ENCODE measurements at regions of chr9 and their contacts with region 1.

Region 1: GRCh38 chr9:127916665-127917613 is at the start of gene ST6GALNAC4:
- DNase-seq: peak; percentile 88 to 96 (median 93)
- H3K4me3 ChIP-seq: peak within 1 kb of the TSS; percentile 54 to 92 (median 80)
- H3K27ac ChIP-seq: peak within 1 kb of the TSS in 55 of 59 donors; percentile 6 to 88 (median 77)
- H3K27me3 ChIP-seq: no peaks in the 10 kb centered on the region
- CTCF ChIP-seq: peak in 9 of 56 donors; percentile 10 to 43 (median 23)
- total RNA-seq, gene ST6GALNAC4: 13.2 to 58.0 (median 23.6) TPM

Region 2: DNA sequence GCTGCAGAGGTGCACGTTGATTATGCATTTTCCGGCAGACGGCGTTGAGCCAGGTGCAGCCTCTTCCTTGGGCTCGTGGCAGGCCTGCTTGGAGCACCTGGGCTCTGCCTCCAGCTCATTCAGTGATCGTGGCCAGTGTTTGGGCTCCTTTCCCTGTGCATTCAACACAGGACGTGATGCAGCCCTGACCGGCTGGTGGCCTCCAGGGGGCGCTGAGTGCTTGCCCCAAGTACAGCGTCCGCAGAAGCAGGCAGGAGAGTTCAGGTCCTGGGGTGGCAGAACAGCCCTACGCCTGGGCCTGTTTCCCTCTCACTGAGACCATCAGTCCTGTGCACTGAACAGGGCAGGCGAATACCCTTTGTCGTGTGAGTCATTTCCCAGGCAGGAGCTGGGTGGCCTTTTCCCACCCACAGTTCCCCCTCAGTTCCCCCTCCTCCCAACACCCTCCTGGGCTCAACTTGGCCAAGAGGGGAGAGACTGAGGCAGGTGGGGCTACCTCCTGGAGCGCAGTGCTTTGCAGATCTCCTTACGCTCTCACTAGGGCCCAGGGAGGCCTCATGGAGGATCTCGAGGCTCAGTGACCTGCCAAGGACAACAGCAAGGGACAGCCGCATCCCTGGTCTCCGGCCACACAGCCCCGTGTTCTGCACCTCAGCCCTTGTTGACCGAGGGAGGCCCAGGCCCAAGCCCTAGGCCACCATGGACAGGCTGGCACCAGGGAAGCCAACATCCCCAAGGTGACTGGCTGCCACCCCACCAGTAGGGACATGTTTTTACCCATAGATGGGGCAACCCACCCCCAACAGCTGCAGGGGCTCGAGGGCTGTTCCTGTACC is 412.8 kb before region 1 on chr9:
- intact Hi-C with region 1: loop called in 1 of 2 experiments (anchors 5 kb)
- DNase-seq: peak; percentile 66 to 86 (median 83)
- H3K4me3 ChIP-seq: no peak overlapping the region
- H3K27ac ChIP-seq: peak overlapping the region in 8 of 59 donors; percentile 3 to 53 (median 31)
- H3K27me3 ChIP-seq: no peaks in the 10 kb centered on the region
- CTCF ChIP-seq: peak; percentile 61 to 95 (median 87)

Region 3: DNA sequence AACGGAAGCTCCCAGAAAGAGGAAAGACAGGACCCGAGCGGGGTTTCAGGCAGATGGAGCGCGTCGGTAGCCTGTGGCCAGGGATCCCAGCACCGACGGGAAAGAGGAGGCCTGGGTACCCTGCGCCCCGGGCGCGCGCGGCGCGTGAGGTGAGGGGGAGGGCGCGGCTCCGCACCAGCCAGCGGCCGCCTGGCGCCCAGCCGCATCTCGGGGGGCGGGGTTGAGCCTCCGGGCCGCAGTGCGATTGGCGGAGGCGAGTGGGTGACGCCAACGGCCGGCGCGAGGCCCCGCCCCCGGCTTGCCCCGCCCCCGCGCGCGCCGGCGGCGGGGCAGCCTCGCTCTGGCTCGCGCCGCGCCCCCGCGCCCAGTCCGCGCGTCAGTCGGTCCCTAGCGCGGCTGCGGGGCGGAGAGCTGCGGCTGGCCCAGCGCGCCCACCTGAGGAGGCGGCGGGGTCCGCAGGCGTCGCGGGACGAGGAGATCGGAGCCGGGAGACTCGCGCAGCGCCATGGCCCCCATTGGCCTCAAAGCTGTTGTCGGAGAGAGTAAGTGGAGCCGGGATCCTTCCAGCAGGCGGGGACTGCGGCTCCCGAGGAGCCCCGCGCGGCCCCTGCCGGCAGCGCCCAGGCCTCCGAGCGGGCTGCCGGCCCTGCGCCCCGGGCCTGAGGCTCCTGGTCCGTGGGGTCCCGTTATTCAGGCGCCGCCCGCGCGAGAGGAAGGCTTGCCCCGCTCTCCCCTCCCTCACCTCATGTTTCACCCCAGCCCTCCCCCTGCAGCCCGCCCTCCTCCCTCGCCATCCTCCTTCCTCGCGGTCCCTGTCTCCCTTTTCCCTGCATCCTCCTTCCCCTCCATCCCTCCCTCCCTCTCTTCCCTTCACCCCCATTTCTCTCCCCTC is 304.8 kb before region 1 on chr9 and contains the start of gene STXBP1:
- intact Hi-C with region 1: loop called in 1 of 2 experiments (anchors 10 kb)
- DNase-seq: peak; percentile 79 to 97 (median 90)
- H3K4me3 ChIP-seq: peak within 1 kb of the TSS; percentile 75 to 98 (median 93)
- H3K27ac ChIP-seq: peak within 1 kb of the TSS; percentile 68 to 98 (median 92)
- H3K27me3 ChIP-seq: no peaks in the 10 kb centered on the region
- CTCF ChIP-seq: peak in 13 of 56 donors; percentile 6 to 30 (median 17)
- total RNA-seq, gene STXBP1: 334 to 1,348 (median 969) TPM

Region 4: GRCh38 chr9:127785023-127785932 is 131.7 kb before region 1 on chr9:
- intact Hi-C with region 1: loop called (anchors 5 kb)
- DNase-seq: peak; percentile 76 to 90 (median 80)
- H3K4me3 ChIP-seq: peak overlapping the region; percentile 37 to 100 (median 96)
- H3K27ac ChIP-seq: peak overlapping the region; percentile 52 to 98 (median 93)
- H3K27me3 ChIP-seq: no peaks in the 10 kb centered on the region
- CTCF ChIP-seq: peak; percentile 50 to 97 (median 88)

Region 5: GRCh38 chr9:127802576-127803443 is 114.1 kb before region 1 on chr9 and contains the start of gene FPGS:
- intact Hi-C with region 1: loop called in 1 of 2 experiments (anchors 5 kb)
- DNase-seq: peak; percentile 62 to 90 (median 80)
- H3K4me3 ChIP-seq: peak within 1 kb of the TSS; percentile 53 to 93 (median 83)
- H3K27ac ChIP-seq: peak within 1 kb of the TSS; percentile 32 to 94 (median 88)
- H3K27me3 ChIP-seq: no peaks in the 10 kb centered on the region
- CTCF ChIP-seq: peak in 19 of 56 donors; percentile 3 to 39 (median 16)
- total RNA-seq, gene FPGS: 19.5 to 55.8 (median 36.6) TPM

Region 6: GRCh38 chr9:127817881-127818434 is 99.0 kb before region 1 on chr9:
- intact Hi-C with region 1: no loop called
- DNase-seq: peak in 1 of 10 donors; percentile 54
- H3K4me3 ChIP-seq: no peak overlapping the region
- H3K27ac ChIP-seq: peak overlapping the region in 3 of 59 donors; percentile 1 to 57 (median 4)
- H3K27me3 ChIP-seq: no peaks in the 10 kb centered on the region
- CTCF ChIP-seq: no peak

Region 7: GRCh38 chr9:127877566-127877998 is 39.4 kb before region 1 on chr9 and contains the start of gene AK1:
- intact Hi-C with region 1: loop called in 1 of 2 experiments (anchors 5 kb)
- DNase-seq: peak; percentile 85 to 94 (median 90)
- H3K4me3 ChIP-seq: peak within 1 kb of the TSS; percentile 57 to 85 (median 73)
- H3K27ac ChIP-seq: peak within 1 kb of the TSS; percentile 49 to 93 (median 88)
- H3K27me3 ChIP-seq: no peaks in the 10 kb centered on the region
- CTCF ChIP-seq: peak in 15 of 56 donors; percentile 13 to 51 (median 22)
- total RNA-seq, gene AK1: 58.9 to 165 (median 129) TPM

Region 8: GRCh38 chr9:127887792-127888191 is 29.1 kb before region 1 on chr9:
- intact Hi-C with region 1: no loop called
- DNase-seq: no peak
- H3K4me3 ChIP-seq: no peak overlapping the region
- H3K27ac ChIP-seq: no peak overlapping the region
- H3K27me3 ChIP-seq: no peaks in the 10 kb centered on the region
- CTCF ChIP-seq: no peak

Region 9: GRCh38 chr9:127966416-127967150 is 49.6 kb after region 1 on chr9:
- intact Hi-C with region 1: no loop called
- DNase-seq: peak in 1 of 10 donors; percentile 38
- H3K4me3 ChIP-seq: peak overlapping the region in 17 of 59 donors; percentile 18 to 53 (median 38)
- H3K27ac ChIP-seq: peak overlapping the region; percentile 67 to 100 (median 97)
- H3K27me3 ChIP-seq: no peaks in the 10 kb centered on the region
- CTCF ChIP-seq: no peak

Region 10: GRCh38 chr9:128406848-128407391 is 490.0 kb after region 1 on chr9:
- intact Hi-C with region 1: no loop called
- DNase-seq: no peak
- H3K4me3 ChIP-seq: no peak overlapping the region
- H3K27ac ChIP-seq: peak overlapping the region; percentile 71 to 100 (median 97)
- H3K27me3 ChIP-seq: no peaks in the 10 kb centered on the region
- CTCF ChIP-seq: no peak

Measured in dorsolateral prefrontal cortex (tissue), 120 donors.